ENCODE measurements at regions of chr12 and their contacts with region 1.

Region 1: DNA sequence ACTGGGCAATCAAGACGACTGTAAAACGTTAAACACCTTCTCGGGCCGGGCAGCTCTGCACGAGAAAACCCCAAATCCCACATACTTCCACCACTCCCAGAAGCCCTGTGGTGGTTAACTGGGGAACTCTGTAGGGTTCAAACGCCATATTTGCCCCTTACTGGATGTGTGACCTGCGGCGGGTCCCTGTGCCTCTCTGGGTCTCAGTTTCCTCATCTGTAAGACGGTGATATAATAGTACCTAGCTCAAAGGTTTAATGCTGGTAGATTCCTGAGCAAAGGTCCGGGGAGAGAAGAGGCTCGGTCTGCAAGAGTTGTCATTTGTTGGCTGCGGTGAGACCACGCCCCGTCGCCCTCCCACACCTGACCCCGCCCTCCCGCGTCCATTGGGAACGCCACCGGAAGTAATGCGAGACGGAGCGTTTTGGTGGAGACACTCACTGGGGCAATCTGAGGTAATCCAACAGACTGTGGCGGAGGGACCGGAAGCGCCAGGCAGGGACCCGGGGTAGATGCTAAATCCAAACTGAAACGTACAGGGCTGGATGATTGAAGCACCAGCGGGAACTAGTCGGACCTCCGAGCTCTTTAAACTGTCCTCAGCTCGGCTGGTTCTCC is 661 bp upstream of the OGFOD2 start:
- DNase-seq: peak; percentile 97 to 99 (median 99)
- ATAC-seq: peak; percentile 81
- H3K4me3 ChIP-seq: peak overlapping the region; percentile 97
- H3K4me3 Mint-ChIP-seq: peak overlapping the region; percentile 98
- H3K27ac ChIP-seq: peak overlapping the region; percentile 99 to 100
- H3K27ac Mint-ChIP-seq: peak overlapping the region; percentile 98
- H3K4me1 ChIP-seq: peaks cover 49% of the 10 kb centered on the region
- H3K4me1 Mint-ChIP-seq: peaks cover 29% of the 10 kb centered on the region
- H3K27me3 ChIP-seq: no peaks in the 10 kb centered on the region
- H3K27me3 Mint-ChIP-seq: no peaks in the 10 kb centered on the region
- CTCF ChIP-seq: no peak

Region 2: DNA sequence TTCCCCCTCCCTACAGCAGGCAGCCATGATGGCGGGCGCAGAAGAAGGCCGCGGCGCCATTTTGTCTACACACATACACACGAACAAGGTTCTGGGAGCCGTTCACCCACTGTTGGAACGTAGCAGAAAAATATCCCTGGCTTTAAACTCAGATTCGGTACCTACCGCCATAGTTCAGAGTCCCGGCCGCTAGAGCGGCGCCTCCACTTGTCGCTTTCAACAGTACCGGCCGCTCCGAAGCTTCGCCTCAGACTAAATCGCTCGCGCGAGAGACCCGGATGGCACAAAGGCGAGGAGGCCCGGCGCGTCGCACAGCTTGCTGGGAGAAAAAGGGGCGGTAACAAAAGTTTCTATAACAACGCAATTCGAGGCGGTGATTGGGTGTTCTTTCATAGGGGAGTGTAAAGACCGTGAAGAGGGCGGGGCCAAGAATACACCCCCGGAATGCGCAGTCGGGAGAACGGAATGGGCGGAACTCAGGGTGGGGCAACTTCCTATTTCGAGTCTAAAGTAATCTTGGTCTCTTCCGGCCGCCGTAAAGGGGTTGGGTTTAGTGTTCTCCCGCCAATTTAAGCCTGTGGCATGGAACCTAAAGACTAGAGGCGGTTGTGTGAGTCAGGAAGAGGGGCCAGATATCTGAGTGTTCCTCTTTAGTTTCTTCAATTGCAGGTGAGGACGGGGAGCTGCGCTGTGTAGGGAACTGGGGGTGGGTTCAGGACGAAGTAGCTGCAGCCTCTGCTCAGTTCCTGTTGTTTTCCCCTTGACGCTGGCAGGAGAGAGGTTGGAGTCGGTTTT is 447.5 kb before region 1 on chr12 and contains the starts of genes KNTC1 and RSRC2:
- CTCF ChIA-PET with region 1: no interaction called
- POLR2A ChIA-PET with region 1: no interaction called
- intact Hi-C with region 1: loop called in 1 of 2 experiments (anchors 10 kb)
- DNase-seq: peak; percentile 93 to 100 (median 96)
- ATAC-seq: peak; percentile 90
- H3K4me3 ChIP-seq: peak within 1 kb of the TSS; percentile 97
- H3K4me3 Mint-ChIP-seq: no peak within 1 kb of the TSS
- H3K27ac ChIP-seq: peak within 1 kb of the TSS; percentile 98 to 99
- H3K27ac Mint-ChIP-seq: no peak within 1 kb of the TSS
- H3K4me1 ChIP-seq: peaks cover 21% of the 10 kb centered on the region
- H3K4me1 Mint-ChIP-seq: peaks cover 36% of the 10 kb centered on the region
- H3K27me3 ChIP-seq: no peaks in the 10 kb centered on the region
- H3K27me3 Mint-ChIP-seq: no peaks in the 10 kb centered on the region
- CTCF ChIP-seq: no peak
- total RNA-seq, gene KNTC1: 23.3 to 23.8 TPM
- total RNA-seq, gene RSRC2: 339 to 341 TPM

Region 3: GRCh38 chr12:122895705-122896636 is 78.4 kb before region 1 on chr12 and contains the start of gene VPS37B:
- CTCF ChIA-PET with region 1: no interaction called
- POLR2A ChIA-PET with region 1: interaction called, 21 read pairs
- intact Hi-C with region 1: no loop called
- DNase-seq: peak; percentile 68 to 95 (median 84)
- ATAC-seq: peak; percentile 66
- H3K4me3 ChIP-seq: peak within 1 kb of the TSS; percentile 64
- H3K4me3 Mint-ChIP-seq: peak within 1 kb of the TSS; percentile 87
- H3K27ac ChIP-seq: peak within 1 kb of the TSS; percentile 83 to 85
- H3K27ac Mint-ChIP-seq: peak within 1 kb of the TSS; percentile 98
- H3K4me1 ChIP-seq: peaks cover 68% of the 10 kb centered on the region
- H3K4me1 Mint-ChIP-seq: peaks cover 93% of the 10 kb centered on the region
- H3K27me3 ChIP-seq: no peaks in the 10 kb centered on the region
- H3K27me3 Mint-ChIP-seq: no peaks in the 10 kb centered on the region
- CTCF ChIP-seq: no peak
- total RNA-seq, gene VPS37B: 97.7 to 104 TPM

Region 4: GRCh38 chr12:122937622-122938091 is 36.7 kb before region 1 on chr12:
- CTCF ChIA-PET with region 1: no interaction called
- POLR2A ChIA-PET with region 1: no interaction called
- intact Hi-C with region 1: no loop called
- DNase-seq: no peak
- ATAC-seq: no peak
- H3K4me3 ChIP-seq: no peak overlapping the region
- H3K4me3 Mint-ChIP-seq: no peak overlapping the region
- H3K27ac ChIP-seq: no peak overlapping the region
- H3K27ac Mint-ChIP-seq: no peak overlapping the region
- H3K4me1 ChIP-seq: peaks cover 1% of the 10 kb centered on the region
- H3K4me1 Mint-ChIP-seq: no peaks in the 10 kb centered on the region
- H3K27me3 ChIP-seq: no peaks in the 10 kb centered on the region
- H3K27me3 Mint-ChIP-seq: no peaks in the 10 kb centered on the region
- CTCF ChIP-seq: no peak

Region 5: GRCh38 chr12:123580772-123581171 is 606.4 kb after region 1 on chr12:
- CTCF ChIA-PET with region 1: no interaction called
- POLR2A ChIA-PET with region 1: no interaction called
- intact Hi-C with region 1: loop called in 1 of 2 experiments (anchors 5 kb)
- DNase-seq: no peak
- ATAC-seq: no peak
- H3K4me3 ChIP-seq: no peak overlapping the region
- H3K4me3 Mint-ChIP-seq: peak overlapping the region; percentile 20
- H3K27ac ChIP-seq: no peak overlapping the region
- H3K27ac Mint-ChIP-seq: no peak overlapping the region
- H3K4me1 ChIP-seq: peaks cover 28% of the 10 kb centered on the region
- H3K4me1 Mint-ChIP-seq: peaks cover 26% of the 10 kb centered on the region
- H3K27me3 ChIP-seq: no peaks in the 10 kb centered on the region
- H3K27me3 Mint-ChIP-seq: no peaks in the 10 kb centered on the region
- CTCF ChIP-seq: no peak